ENCODE measurements at regions of chr12 and their contacts with region 1.

Region 1: GRCh38 chr12:51083126-51083833 is at the start of gene CSRNP2:
- DNase-seq: peak; percentile 97
- ATAC-seq: peak; percentile 99
- H3K4me3 Mint-ChIP-seq: peak within 1 kb of the TSS; percentile 94
- H3K27ac Mint-ChIP-seq: peak within 1 kb of the TSS; percentile 90
- H3K4me1 Mint-ChIP-seq: peaks cover 36% of the 10 kb centered on the region
- H3K27me3 Mint-ChIP-seq: no peaks in the 10 kb centered on the region
- CTCF ChIP-seq: no peak
- total RNA-seq, gene CSRNP2: 9.2 to 9.6 TPM

Region 2: DNA sequence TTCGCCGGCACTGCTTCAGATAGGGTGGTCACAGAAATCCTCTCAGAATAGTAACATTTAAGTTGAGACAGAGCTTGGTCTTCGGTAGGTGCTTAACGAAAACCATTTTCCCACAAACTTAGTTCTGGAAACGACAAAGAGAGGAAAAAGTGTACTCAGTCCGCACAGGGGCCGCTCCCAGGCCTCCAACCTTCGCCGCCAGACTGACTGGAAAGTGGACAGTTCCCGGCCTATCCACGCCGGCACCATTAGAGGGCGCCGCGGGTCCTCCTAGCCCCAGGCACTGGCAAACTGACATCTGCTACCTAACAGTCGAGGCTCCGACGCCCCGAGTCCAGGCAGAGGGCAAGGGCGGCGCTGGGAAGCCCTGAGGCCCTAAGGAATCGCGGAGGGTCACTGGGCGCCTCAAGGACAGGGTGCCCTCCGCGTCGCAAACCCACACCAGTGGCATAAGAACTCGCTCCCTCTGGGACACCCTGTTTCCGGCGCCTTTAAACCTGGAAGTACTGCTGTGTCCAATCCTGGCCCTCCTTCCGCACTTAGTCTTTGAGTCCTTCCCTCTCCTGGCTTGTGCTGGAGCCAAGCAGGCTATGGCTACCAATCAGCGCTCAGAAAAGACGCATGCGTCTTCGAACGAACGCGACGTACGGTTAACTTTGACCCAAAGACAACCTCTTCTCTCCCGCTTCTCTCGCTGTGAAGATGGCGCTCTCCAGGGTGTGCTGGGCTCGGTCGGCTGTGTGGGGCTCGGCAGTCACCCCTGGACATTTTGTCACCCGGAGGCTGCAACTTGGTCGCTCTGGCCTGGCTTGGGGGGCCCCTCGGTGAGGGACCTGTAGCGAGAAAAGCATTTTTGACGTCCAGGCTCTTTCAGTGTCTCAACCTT is 35.4 kb before region 1 on chr12 and contains the start of gene LETMD1:
- CTCF ChIA-PET with region 1: interaction called, 4 read pairs
- POLR2A ChIA-PET with region 1: interaction called, 11 read pairs
- intact Hi-C with region 1: no loop called
- DNase-seq: peak; percentile 94
- ATAC-seq: peak; percentile 97
- H3K4me3 Mint-ChIP-seq: peak within 1 kb of the TSS; percentile 97
- H3K27ac Mint-ChIP-seq: peak within 1 kb of the TSS; percentile 96
- H3K4me1 Mint-ChIP-seq: peaks cover 28% of the 10 kb centered on the region
- H3K27me3 Mint-ChIP-seq: no peaks in the 10 kb centered on the region
- CTCF ChIP-seq: peak; percentile 95
- total RNA-seq, gene LETMD1: 71.6 to 81.5 TPM

Region 3: GRCh38 chr12:51246254-51246853 is 163.1 kb after region 1 on chr12:
- CTCF ChIA-PET with region 1: no interaction called
- POLR2A ChIA-PET with region 1: interaction called, 15 read pairs
- intact Hi-C with region 1: no loop called
- DNase-seq: peak; percentile 60
- ATAC-seq: peak; percentile 75
- H3K4me3 Mint-ChIP-seq: no peak overlapping the region
- H3K27ac Mint-ChIP-seq: peak overlapping the region; percentile 82
- H3K4me1 Mint-ChIP-seq: peaks cover 44% of the 10 kb centered on the region
- H3K27me3 Mint-ChIP-seq: no peaks in the 10 kb centered on the region
- CTCF ChIP-seq: no peak